Right ventricle myocardium inferior (tissue), 1 donor: ENCODE measurements at regions of chr15 and their contacts with region 1.

Region 1: DNA sequence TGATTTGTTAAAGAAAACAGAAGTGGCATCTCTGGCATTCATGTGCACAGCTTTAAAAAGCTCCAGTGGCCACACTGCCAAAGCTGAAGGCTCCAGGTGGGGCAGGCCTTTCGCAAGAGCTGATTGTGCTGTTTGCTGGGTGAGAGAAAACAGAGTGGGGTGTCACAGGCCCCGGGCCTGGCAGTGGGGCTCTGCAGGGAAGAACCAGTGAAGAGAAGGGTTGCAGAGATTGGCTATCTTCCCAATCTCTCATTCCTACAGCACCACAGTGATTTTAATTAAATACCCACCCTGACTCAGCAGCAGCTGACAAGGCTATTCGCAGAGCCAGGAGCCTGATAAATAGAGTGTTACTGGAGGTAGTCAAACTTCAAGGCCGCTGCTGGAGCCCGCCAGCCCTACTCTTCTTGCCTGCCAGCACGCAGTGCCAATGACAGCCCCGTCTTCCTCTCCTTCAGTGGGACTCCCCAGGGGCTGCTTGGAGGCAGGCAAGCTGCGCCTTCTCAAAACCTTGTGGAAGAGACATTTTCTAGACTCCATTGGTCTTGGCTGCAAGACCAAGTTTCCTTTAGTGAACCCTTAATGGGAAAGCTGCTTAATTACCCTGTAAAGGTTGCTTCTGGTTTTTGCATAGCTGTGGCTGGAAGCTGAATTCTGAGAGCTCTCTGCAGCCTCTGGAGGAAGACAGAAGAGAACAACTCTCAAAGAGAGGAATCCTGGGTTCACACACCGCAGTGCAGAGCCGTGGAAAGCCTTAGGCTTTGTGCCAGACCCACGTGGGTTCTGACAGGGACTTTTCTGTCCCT is 225.8 kb upstream of the SLCO3A1 start:
- DNase-seq: peak; percentile 77
- ATAC-seq: peak; percentile 92

Region 2: DNA sequence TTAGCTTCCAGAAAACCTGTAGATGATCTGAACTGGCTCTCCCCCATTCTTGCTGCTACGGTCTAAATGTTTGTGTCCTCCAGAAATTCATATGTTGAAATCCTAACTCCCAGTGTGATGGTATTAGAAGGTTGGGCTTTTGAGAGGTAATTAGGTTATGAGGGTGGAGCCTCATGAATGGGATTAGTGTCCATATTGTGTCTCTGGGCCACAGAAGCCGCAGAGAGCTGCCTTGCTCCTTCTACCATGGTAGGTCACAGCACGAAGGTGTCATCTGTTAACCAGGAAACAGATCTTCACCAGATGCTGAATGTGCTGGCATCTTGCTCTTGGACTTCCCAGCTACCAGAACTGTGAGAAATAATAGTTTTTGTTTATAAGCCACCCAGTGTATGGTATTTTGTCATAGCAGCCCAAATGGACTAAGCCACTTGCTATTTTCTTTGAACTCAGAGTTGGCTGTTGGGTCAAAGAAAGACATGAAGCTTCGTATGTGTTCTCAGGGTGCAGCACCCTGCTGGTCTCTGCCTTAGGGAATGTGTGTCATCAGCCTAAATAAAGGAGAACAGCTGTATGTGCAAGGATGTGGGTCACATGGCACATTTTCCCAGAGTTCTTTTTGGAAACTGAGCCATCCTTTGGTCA is 91.7 kb before region 1 on chr15:
- intact Hi-C with region 1: loop called (anchors 5 kb)
- DNase-seq: no peak
- ATAC-seq: peak; percentile 24

Region 3: GRCh38 chr15:91824256-91824655 is 196.6 kb after region 1 on chr15:
- intact Hi-C with region 1: loop called (anchors 10 kb)
- DNase-seq: no peak
- ATAC-seq: peak; percentile 91